WTC11 (cell line): ENCODE measurements at regions of chr17 and their contacts with region 1.

Region 1: DNA sequence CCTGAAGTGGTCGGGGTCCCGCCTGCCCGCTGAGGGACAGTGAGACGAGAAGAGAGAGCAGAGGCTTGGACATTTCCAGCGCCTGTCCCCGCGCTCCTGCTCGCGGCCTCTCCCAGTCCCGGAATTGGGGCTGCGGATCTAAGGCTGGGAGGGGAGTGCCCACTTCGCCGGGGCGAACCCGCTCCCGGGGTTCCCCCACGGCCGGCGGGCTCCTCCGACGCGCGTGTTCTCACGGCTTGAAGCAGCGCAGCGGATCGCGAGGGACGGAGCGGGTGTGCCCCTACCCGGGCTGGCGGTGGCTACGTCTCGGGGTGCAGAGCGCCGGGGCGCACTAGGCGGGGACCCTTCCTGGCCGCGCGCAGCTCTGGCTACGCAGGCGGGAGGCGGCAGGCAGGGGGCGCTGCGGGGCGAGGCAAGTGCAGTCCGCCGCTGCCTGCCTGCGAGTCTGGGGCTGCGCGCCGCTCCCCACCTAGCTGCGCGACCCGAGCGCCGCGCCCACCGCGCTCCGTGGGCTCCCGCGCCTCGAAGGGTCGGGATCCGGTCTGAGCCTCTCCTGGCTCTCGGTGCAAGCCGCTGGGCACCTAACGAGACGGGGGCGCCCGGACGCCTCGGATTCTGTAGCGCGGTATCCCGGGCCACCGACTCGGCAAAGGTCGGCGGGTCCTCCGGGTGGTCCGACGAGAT is 1.2 kb downstream of the NGFR start:
- DNase-seq: peak; percentile 90
- ATAC-seq: peak; percentile 69
- H3K4me3 Mint-ChIP-seq: peak overlapping the region; percentile 85
- H3K27ac Mint-ChIP-seq: no peak overlapping the region
- H3K4me1 Mint-ChIP-seq: peaks cover 31% of the 10 kb centered on the region
- H3K27me3 Mint-ChIP-seq: peaks cover 75% of the 10 kb centered on the region
- CTCF ChIP-seq: peak; percentile 87

Region 2: DNA sequence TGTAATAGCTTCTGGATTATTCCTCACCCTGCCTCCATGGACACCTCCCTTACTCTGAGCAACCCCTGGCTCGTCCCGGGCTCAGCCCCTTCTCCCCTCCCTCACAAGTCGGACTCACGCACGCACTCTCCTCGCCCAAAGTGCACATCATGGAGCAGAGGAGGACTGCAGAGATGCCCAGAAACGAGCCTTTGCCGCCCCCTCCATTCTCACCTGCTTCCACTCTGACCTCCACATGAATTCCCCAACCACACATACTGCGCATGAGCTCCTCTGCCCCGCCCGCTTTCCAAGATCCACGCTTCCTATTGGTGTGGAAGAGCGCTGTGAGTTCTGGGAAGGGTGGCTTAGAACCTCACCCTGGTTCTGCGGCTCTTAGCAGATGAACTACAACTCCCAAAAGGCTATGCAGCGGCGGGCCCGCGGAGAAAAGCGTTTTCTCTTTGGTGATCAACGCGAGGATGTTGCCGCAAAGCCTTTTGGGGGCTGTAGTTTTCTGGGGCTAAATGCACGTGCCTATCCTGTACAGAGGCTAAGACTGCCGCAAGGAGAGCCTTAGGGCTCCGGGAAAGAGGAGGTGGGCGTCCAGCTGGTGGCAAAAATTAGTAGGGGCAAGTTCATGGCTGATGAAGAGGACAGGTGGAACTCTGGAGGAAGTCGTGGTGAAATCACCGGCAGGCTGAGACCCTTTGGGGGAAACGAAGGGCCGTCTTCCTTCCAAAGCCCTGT is 81.5 kb before region 1 on chr17 and contains the start of gene PHB1:
- CTCF ChIA-PET with region 1: interaction called, 14 read pairs
- POLR2A ChIA-PET with region 1: no interaction called
- DNase-seq: peak; percentile 96
- ATAC-seq: peak; percentile 99
- H3K4me3 Mint-ChIP-seq: peak within 1 kb of the TSS; percentile 100
- H3K27ac Mint-ChIP-seq: peak within 1 kb of the TSS; percentile 94
- H3K4me1 Mint-ChIP-seq: 0 out of 2 replicates have a peak, but pooled peaks cover 8% of the 10 kb centered on the region
- H3K27me3 Mint-ChIP-seq: peaks cover 8% of the 10 kb centered on the region; the same call in 1 of the 2 replicates
- CTCF ChIP-seq: no peak
- total RNA-seq, gene PHB1: 350 to 375 TPM (median 362 TPM) in 3 replicates

Region 3: GRCh38 chr17:49456183-49456965 is 40.0 kb before region 1 on chr17:
- CTCF ChIA-PET with region 1: interaction called, 10 read pairs
- POLR2A ChIA-PET with region 1: no interaction called
- DNase-seq: no peak
- ATAC-seq: no peak
- H3K4me3 Mint-ChIP-seq: no peak overlapping the region
- H3K27ac Mint-ChIP-seq: peak overlapping the region; percentile 6; the same call in 1 of the 2 replicates
- H3K4me1 Mint-ChIP-seq: peaks cover 31% of the 10 kb centered on the region
- H3K27me3 Mint-ChIP-seq: no peaks in the 10 kb centered on the region; the same call in 1 of the 2 replicates
- CTCF ChIP-seq: no peak

Region 4: DNA sequence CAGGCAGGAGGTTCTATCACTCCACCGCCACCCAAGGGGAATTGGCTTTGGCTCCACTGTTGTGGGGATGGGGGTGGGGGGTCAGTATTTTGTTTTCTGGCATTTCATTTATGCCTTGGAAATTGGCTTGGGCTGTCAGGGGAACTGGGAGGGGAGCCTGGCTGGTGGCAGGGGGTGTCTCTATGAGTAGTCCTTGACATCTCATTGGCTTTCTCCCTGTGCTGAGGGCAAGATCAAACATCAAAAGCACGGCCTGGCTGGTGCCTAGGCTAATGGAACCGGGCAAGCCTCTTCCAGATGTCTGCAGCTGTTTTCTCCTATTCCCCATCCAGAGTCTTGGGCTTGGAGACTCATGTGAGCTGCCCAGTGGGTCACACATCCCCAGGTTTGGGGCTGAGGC is 18.6 kb before region 1 on chr17:
- CTCF ChIA-PET with region 1: interaction called, 10 read pairs
- POLR2A ChIA-PET with region 1: no interaction called
- DNase-seq: no peak
- ATAC-seq: no peak
- H3K4me3 Mint-ChIP-seq: no peak overlapping the region
- H3K27ac Mint-ChIP-seq: no peak overlapping the region
- H3K4me1 Mint-ChIP-seq: peaks cover 29% of the 10 kb centered on the region
- H3K27me3 Mint-ChIP-seq: peaks cover 33% of the 10 kb centered on the region
- CTCF ChIP-seq: no peak

Region 5: GRCh38 chr17:49508061-49508865 is 11.9 kb after region 1 on chr17:
- CTCF ChIA-PET with region 1: interaction called, 199 read pairs
- POLR2A ChIA-PET with region 1: interaction called, 10 read pairs
- DNase-seq: peak; percentile 78
- ATAC-seq: peak; percentile 73
- H3K4me3 Mint-ChIP-seq: peak overlapping the region; percentile 49
- H3K27ac Mint-ChIP-seq: peak overlapping the region; percentile 85
- H3K4me1 Mint-ChIP-seq: peaks cover 60% of the 10 kb centered on the region
- H3K27me3 Mint-ChIP-seq: peaks cover 7% of the 10 kb centered on the region; the same call in 1 of the 2 replicates
- CTCF ChIP-seq: no peak

Region 6: GRCh38 chr17:49548506-49549310 is 52.4 kb after region 1 on chr17:
- CTCF ChIA-PET with region 1: interaction called, 31 read pairs
- POLR2A ChIA-PET with region 1: no interaction called
- DNase-seq: peak; percentile 83
- ATAC-seq: peak; percentile 81
- H3K4me3 Mint-ChIP-seq: no peak overlapping the region
- H3K27ac Mint-ChIP-seq: no peak overlapping the region
- H3K4me1 Mint-ChIP-seq: peaks cover 25% of the 10 kb centered on the region
- H3K27me3 Mint-ChIP-seq: peaks cover 5% of the 10 kb centered on the region; the same call in 1 of the 2 replicates
- CTCF ChIP-seq: peak; percentile 44; the same call in 1 of the 2 replicates

Region 7: GRCh38 chr17:49603720-49604119 is 107.4 kb after region 1 on chr17:
- CTCF ChIA-PET with region 1: no interaction called
- POLR2A ChIA-PET with region 1: no interaction called
- DNase-seq: no peak
- ATAC-seq: no peak
- H3K4me3 Mint-ChIP-seq: no peak overlapping the region
- H3K27ac Mint-ChIP-seq: no peak overlapping the region
- H3K4me1 Mint-ChIP-seq: no peaks in the 10 kb centered on the region
- H3K27me3 Mint-ChIP-seq: no peaks in the 10 kb centered on the region
- CTCF ChIP-seq: no peak